Heart right ventricle (tissue), 16 donors: ENCODE measurements at regions of chr17 and their contacts with region 1.

Region 1: DNA sequence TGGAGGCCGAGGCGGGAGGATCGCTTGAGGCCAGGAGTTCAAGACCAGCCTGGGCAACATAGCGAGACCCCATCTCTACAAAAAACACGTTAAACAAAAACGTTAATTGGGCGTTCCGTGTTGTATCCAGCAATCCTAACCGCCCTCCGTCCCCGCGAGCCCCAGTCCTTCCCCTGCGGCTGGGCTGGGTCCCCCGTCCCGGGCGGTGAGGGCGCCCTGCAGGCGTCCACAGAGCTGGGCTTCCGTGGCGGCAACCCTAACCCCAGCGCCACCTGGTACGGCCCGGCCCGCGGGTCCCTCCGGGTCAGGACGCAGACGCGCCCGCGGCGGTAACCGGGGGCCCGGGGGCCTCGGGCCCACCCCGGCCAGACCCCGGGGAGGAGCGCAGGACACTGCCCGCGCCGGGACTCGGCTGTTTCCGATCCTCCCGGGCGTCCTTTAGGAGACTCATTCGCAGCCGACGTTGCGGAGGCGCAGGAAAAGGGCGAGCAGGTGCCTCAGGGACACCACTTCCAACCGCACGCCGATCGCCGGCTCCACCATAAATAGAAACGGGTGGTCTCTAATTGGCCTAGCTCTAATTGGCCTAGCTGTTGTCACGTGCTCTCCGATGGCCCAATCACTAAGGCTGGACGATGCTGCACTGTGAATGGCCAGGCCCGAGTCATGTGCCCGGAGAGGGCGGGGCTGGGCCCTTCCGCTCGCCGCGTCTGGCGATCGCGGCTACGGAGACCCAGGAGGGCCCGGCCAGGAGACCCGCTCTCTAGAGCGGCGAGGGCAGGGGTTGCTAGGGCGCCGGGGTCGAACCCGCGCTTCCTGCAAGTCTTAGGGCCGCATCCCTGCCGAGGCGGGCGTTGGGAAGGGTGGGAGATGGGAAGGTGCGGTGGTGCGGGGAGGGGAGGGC is 19.0 kb upstream of the CSNK1D start:
- DNase-seq: peak; percentile 94 to 97
- ATAC-seq: peak; percentile 92 to 96 (median 95)
- H3K4me3 ChIP-seq: peak overlapping the region; percentile 53 to 93 (median 76)
- H3K27ac ChIP-seq: peak overlapping the region; percentile 86 to 99 (median 96)
- H3K4me1 ChIP-seq: peaks cover 14 to 63% (median 45%) of the 10 kb centered on the region in 9 donors
- H3K27me3 ChIP-seq: no peaks in the 10 kb centered on the region
- CTCF ChIP-seq: no peak

Region 2: DNA sequence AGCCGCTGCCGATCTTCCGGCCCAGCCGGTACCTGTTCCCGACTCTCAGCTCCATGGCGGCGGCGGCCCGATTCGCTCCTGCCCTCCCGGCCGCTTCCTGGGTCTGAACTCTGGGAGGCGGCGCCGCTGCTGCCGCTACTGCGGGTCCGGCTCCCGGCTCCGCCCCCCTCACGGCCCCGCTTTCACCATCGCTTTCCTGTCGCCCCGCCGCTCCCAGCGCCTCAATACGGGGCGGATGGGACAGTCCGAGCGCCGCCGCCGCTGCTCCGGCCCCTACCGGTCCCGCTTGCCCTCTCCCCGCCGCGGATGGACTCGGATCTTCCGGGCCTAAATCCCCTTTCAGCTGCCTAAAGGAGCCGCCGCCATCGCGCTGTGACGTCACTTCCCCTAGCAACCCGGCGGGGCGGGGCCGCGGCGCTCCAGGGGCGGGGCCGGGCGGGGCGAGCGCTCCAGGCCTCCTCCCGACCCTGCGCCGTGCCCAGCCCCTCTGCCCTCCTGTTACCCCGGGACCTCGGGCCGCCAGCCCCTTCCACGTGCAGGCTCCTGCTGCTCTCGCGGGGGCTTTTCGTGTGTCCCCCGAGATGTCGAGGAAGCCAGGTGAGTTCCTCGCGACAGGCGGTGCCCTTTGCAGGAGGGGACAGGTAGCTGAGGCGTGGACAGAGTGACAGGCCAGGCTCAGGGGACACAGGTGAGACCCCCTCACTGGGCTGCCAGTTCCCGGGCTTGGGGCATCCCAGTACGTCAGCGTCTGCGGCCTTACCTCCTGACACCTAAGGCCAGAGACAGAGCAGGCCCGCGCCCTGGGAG is 19.0 kb before region 1 on chr17 and contains the start of gene CSNK1D:
- intact Hi-C with region 1: loop called in 4 of 10 experiments (anchors 1 to 2 kb)
- DNase-seq: peak; percentile 92 to 93
- ATAC-seq: peak; percentile 93 to 96 (median 94)
- H3K4me3 ChIP-seq: peak within 1 kb of the TSS; percentile 61 to 96 (median 88)
- H3K27ac ChIP-seq: peak within 1 kb of the TSS; percentile 86 to 100 (median 98)
- H3K4me1 ChIP-seq: peaks cover 14 to 52% (median 47%) of the 10 kb centered on the region in 9 donors
- H3K27me3 ChIP-seq: no peaks in the 10 kb centered on the region
- CTCF ChIP-seq: no peak
- total RNA-seq, gene CSNK1D: 56.8 to 72.7 (median 67.8) TPM